ENCODE measurements at regions of chr1 and their contacts with region 1.

Region 1: GRCh38 chr1:215146341-215146826 is 63.8 kb downstream of the KCNK2 start:
- DNase-seq: no peak
- H3K4me3 ChIP-seq: no peak overlapping the region
- H3K27ac ChIP-seq: no peak overlapping the region
- H3K27me3 ChIP-seq: no peaks in the 10 kb centered on the region
- CTCF ChIP-seq: peak; percentile 66

Region 2: DNA sequence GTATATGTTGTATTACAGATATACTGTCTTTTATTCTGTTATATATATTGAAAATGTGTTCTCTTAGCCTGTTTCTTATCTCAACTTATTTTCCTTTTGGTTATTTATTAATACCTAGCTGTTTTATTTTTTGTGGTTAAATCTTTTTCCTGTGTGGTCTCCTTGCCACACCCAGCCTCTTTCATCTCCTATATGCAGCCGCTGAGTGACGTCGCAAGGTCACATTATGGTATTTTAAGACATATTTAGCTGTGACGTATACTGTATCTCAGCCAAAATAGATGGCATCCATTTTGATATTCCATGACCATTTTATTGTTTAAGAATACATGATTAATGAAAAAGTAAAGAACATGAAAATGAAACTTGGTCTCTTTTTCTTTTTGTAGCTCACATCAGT is 514.3 kb before region 1 on chr1:
- CTCF ChIA-PET with region 1: interaction called, 21 read pairs
- POLR2A ChIA-PET with region 1: no interaction called
- DNase-seq: no peak
- H3K4me3 ChIP-seq: no peak overlapping the region
- H3K27ac ChIP-seq: no peak overlapping the region
- H3K27me3 ChIP-seq: no peaks in the 10 kb centered on the region
- CTCF ChIP-seq: no peak

Region 3: GRCh38 chr1:214637722-214638458 is 508.5 kb before region 1 on chr1:
- CTCF ChIA-PET with region 1: interaction called, 21 read pairs
- POLR2A ChIA-PET with region 1: no interaction called
- DNase-seq: peak; percentile 24
- H3K4me3 ChIP-seq: no peak overlapping the region
- H3K27ac ChIP-seq: no peak overlapping the region
- H3K27me3 ChIP-seq: no peaks in the 10 kb centered on the region
- CTCF ChIP-seq: peak; percentile 84

Region 4: DNA sequence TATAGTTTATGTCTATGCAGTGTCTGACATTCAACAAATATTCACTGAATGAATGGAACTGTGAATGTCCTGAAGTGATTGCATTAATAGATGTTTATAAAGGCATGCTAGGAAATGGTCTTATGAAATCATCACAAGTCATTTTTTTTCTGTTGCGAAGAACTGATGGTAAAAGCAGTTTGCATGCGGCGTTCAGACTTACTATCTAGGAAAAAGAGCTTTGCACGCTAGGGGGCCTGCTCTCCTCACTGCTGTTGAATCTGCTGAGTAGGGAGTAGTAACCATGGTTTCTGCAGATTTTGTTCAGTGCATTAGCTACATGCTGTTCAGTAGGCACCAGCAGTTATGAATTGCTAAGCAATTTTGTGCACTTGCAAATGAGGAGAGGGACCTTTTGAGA is 485.5 kb before region 1 on chr1:
- CTCF ChIA-PET with region 1: interaction called, 64 read pairs
- POLR2A ChIA-PET with region 1: no interaction called
- DNase-seq: peak; percentile 84
- H3K4me3 ChIP-seq: no peak overlapping the region
- H3K27ac ChIP-seq: no peak overlapping the region
- H3K27me3 ChIP-seq: no peaks in the 10 kb centered on the region
- CTCF ChIP-seq: peak; percentile 88

Region 5: GRCh38 chr1:214808845-214809460 is 337.4 kb before region 1 on chr1:
- CTCF ChIA-PET with region 1: interaction called, 10 read pairs
- POLR2A ChIA-PET with region 1: no interaction called
- DNase-seq: no peak
- H3K4me3 ChIP-seq: no peak overlapping the region
- H3K27ac ChIP-seq: no peak overlapping the region
- H3K27me3 ChIP-seq: no peaks in the 10 kb centered on the region
- CTCF ChIP-seq: peak; percentile 44; the same call in 1 of the 2 replicates

Region 6: DNA sequence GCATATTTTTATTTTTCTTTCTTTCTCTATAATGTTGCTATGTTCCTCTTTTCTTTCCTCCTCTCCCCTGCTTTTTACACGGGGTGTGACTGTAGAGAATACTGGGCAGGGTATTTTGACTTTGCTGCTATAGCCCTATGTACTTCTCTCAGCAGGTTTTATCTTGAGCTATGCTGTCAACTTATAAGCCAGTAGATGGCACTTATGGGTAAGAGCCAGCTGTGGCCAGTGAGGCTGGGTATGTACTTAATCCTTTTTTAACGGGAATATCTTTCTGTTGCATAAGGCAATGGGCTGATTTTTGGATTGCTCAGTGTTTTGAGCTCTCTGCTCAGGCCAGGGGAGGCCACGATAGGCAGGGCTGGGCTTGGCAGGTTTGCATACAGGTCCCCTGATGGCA is 35.1 kb after region 1 on chr1:
- CTCF ChIA-PET with region 1: no interaction called
- POLR2A ChIA-PET with region 1: no interaction called
- DNase-seq: no peak
- H3K4me3 ChIP-seq: no peak overlapping the region
- H3K27ac ChIP-seq: no peak overlapping the region
- H3K27me3 ChIP-seq: no peaks in the 10 kb centered on the region
- CTCF ChIP-seq: no peak

Measured in AG04450 (cell line).